ENCODE measurements at regions of chr3 and their contacts with region 1.

Region 1: GRCh38 chr3:150408221-150409102 is at the start of gene TSC22D2:
- DNase-seq: peak; percentile 93
- ATAC-seq: peak; percentile 69
- H3K4me3 Mint-ChIP-seq: peak within 1 kb of the TSS; percentile 92
- H3K27ac Mint-ChIP-seq: peak within 1 kb of the TSS; percentile 86
- H3K4me1 Mint-ChIP-seq: peaks cover 29% of the 10 kb centered on the region
- H3K27me3 Mint-ChIP-seq: peaks cover 3% of the 10 kb centered on the region
- total RNA-seq, gene TSC22D2: 8.6 to 8.9 TPM

Region 2: DNA sequence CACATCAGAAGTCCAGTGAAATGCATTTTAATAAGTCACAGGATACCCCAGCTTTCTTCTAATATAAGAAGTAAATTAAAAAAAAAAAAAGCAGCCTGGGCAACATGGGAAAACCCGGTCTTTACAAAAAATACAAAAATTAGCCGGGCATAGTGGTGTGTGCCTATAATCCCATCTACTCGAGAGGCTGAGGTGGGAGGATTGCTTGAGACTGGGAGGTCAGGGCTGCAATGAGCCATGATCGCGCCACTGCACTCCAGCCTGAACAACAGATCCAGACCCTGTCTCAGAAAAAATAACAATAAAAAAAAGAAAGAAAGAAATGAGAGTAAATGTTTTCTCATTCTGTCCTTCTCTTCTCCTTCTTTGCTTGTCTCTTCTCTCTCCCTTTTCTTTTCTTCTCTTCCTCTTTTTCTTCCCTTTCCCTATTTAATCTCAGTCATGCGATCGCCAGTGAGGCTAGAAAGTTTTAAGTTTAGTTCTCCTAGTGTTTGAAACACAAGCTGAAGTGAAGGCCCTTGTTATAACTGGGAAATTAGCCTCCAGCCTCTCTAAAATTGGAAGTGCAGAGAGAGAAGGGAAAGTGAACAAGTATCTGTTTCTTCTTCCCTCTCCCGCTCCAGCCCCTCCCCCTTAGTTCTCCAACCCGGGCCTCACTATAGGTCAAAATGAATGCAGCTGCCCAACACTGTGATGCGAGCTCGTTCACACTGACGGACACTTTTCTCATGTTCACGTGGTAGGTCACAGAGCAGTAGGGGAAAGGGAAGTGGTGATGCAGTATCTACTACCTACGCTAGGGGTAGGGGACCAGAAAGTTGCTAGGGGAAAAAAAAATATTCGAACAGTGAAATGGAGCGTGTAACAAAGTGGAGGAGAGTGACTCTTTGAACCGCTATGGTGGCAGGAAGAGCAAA is 23.9 kb before region 1 on chr3:
- CTCF ChIA-PET with region 1: interaction called, 21 read pairs
- POLR2A ChIA-PET with region 1: interaction called, 29 read pairs
- DNase-seq: peak; percentile 66
- ATAC-seq: peak; percentile 96
- H3K4me3 Mint-ChIP-seq: peak overlapping the region; percentile 17
- H3K27ac Mint-ChIP-seq: peak overlapping the region; percentile 75
- H3K4me1 Mint-ChIP-seq: peaks cover 30% of the 10 kb centered on the region
- H3K27me3 Mint-ChIP-seq: peaks cover 2% of the 10 kb centered on the region

Region 3: DNA sequence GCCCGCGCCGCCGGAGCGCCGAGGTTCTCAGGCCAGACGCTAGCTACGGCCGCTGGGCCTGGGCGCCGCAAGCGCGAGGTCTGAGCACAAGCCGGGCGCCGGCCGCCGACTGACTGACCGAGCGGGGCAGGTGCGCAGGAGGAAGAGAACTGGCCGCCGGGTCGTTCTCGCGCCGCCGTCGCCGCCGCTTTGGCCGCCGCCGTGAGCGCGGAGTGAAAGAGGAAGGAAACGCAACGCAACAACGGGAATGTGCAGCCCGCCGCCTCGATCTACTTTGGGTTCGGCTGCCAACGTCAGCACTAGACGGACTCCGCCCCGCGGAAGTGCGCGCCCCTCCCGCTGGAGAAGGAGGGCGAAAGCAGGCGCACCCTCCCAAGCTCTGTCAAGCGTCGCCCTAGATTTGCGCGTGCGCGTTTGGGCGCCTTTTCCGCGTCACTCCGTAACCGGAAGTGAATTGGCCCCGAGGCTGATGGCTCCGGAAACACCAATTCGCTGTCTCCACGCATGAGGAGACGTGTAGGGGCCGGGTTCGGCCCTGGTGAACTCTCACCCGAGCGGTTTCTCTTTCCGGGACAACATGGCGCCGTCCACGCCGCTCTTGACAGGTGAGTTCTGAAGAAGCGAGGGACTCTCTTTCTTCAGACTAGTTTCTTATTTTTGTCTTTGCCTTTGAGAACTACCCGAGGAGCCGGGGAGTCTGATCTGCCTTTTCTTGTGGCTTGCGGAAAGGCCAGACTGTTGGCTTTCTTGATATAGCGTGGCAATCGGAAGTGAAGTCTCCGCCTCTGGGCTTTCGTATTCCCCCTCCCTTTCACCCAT is 138.0 kb after region 1 on chr3 and contains the starts of genes EIF2A and SERP1:
- CTCF ChIA-PET with region 1: interaction called, 9 read pairs
- POLR2A ChIA-PET with region 1: interaction called, 19 read pairs
- DNase-seq: peak; percentile 99
- ATAC-seq: peak; percentile 93
- H3K4me3 Mint-ChIP-seq: peak within 1 kb of the TSS; percentile 94
- H3K27ac Mint-ChIP-seq: peak within 1 kb of the TSS; percentile 92
- H3K4me1 Mint-ChIP-seq: peaks cover 51% of the 10 kb centered on the region
- H3K27me3 Mint-ChIP-seq: no peaks in the 10 kb centered on the region
- total RNA-seq, gene EIF2A: 77.0 to 89.0 TPM
- total RNA-seq, gene SERP1: 83.4 to 87.3 TPM